Dorsolateral prefrontal cortex (tissue), 120 donors: ENCODE measurements at regions of chr1 and their contacts with region 1.

Region 1: DNA sequence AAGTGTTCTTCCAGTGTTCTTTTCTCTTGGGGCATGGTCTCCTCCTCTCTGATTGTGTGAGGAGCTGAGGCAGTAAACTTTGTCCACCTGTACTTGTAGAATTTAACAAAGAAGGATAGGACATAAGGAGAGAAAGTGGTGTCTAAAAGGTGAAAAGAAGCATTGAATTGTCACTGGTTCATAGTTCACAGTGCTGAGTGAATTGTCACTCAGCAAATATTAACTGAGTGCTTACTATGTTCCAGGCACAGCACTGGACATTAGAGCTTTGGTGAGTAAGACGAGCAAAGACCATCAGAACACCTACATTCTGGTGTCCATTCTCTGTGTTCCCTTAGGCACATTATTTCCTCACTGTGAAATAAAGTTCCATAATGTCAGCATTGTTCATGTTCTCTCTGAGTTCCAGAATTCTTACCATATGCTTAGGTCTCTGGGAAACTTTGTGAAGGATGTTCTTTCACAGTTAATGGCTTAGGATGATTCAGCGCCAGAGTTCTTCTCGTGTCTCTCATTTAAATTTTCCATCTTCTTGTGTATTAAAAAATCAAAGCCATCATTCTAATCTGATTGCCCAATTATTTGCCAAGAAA is 156.8 kb upstream of the HOOK1 start:
- DNase-seq: no peak
- H3K4me3 ChIP-seq: no peak overlapping the region
- H3K27ac ChIP-seq: no peak overlapping the region
- H3K27me3 ChIP-seq: no peaks in the 10 kb centered on the region
- CTCF ChIP-seq: no peak

Region 2: DNA sequence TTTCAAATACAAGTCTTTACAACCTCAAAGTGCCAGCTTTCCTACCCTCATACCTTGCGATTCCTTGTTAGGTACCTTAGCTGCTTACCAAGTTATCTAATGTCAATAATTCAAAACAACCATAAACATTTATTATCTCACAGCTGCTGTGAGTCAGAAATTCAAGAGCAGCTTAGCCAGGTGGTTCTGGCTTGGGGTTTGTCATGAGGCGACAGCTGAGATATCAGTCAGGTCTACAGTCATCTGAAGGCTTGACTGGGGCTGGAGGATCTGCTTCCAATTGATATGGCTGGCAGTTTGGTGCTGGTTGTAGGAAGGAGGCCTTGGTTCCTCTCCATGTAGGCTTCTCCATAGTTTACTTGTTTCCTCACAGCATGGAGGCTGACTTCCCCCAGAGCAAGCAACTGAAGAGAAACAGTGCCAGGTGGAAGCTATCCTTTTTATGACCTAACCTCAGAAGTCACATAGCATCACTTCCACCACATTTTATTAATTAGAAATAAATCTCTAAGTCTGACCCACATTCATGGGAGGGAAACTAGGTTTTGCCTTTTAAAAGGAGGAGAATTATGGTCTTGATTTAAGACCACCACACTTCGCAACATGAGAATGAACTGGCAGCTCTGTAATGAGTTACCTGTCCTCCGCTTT is 464.4 kb before region 1 on chr1:
- intact Hi-C with region 1: loop called in 1 of 2 experiments (anchors 5 kb)
- DNase-seq: no peak
- H3K4me3 ChIP-seq: no peak overlapping the region
- H3K27ac ChIP-seq: no peak overlapping the region
- H3K27me3 ChIP-seq: peaks cover 0 to 3% (median 0%) of the 10 kb centered on the region in 45 donors
- CTCF ChIP-seq: no peak

Region 3: GRCh38 chr1:59506952-59507351 is 151.0 kb before region 1 on chr1:
- intact Hi-C with region 1: no loop called
- DNase-seq: no peak
- H3K4me3 ChIP-seq: no peak overlapping the region
- H3K27ac ChIP-seq: peak overlapping the region in 1 of 59 donors; percentile 10
- H3K27me3 ChIP-seq: no peaks in the 10 kb centered on the region
- CTCF ChIP-seq: no peak

Region 4: GRCh38 chr1:59560807-59561450 is 97.0 kb before region 1 on chr1:
- intact Hi-C with region 1: no loop called
- DNase-seq: no peak
- H3K4me3 ChIP-seq: no peak overlapping the region
- H3K27ac ChIP-seq: no peak overlapping the region
- H3K27me3 ChIP-seq: no peaks in the 10 kb centered on the region
- CTCF ChIP-seq: no peak

Region 5: GRCh38 chr1:59879574-59879973 is 221.6 kb after region 1 on chr1:
- intact Hi-C with region 1: no loop called
- DNase-seq: peak; percentile 11 to 81 (median 57)
- H3K4me3 ChIP-seq: no peak overlapping the region
- H3K27ac ChIP-seq: no peak overlapping the region
- H3K27me3 ChIP-seq: no peaks in the 10 kb centered on the region
- CTCF ChIP-seq: peak; percentile 34 to 78 (median 56)